Dorsolateral prefrontal cortex (tissue), 120 donors: ENCODE measurements at regions of chr17 and their contacts with region 1.

Region 1: DNA sequence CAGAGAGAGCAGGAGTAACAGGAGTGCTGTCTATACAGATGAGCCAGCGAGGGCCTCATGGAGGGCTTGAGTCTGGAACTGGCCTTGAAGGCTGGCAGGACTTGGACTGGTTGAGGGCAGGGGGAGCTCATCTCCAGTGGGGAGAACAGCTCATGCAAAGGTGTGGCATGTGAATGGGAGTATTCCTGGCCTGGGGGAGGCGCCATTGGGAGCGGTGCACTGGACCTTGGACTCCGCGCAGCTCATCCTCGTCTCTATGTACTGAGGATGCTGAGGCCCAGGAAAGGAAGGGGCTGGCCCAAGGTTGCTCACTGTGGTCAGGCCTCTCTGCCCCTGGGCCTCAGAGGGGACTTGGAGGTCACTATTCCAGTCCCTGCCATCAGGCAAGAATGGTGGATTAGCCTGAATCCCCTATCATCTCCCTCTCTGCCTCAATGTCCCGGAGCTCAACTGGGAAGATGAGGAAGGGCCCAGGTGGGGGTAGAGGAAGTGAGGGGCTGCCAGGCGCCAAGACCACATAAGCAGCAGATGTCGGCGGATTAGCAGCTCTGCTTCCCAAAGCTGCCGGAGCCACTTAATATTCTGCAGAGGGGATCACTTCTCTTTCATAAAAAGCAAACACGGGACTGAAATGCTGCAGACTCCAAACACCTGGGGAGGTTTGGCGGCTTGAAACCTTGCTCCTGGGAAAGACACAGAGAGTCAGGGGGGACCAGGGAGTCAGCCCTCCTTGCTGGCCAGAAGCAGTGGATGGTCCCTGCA is 88.9 kb downstream of the SDK2 start:
- DNase-seq: no peak
- H3K4me3 ChIP-seq: no peak overlapping the region
- H3K27ac ChIP-seq: no peak overlapping the region
- H3K27me3 ChIP-seq: peaks cover 0 to 22% (median 0%) of the 10 kb centered on the region in 45 donors
- CTCF ChIP-seq: no peak

Region 2: GRCh38 chr17:73532421-73532901 is 22.9 kb before region 1 on chr17:
- intact Hi-C with region 1: no loop called
- DNase-seq: peak in 1 of 10 donors; percentile 70
- H3K4me3 ChIP-seq: no peak overlapping the region
- H3K27ac ChIP-seq: peak overlapping the region in 13 of 59 donors; percentile 9 to 72 (median 50)
- H3K27me3 ChIP-seq: peaks cover 0 to 4% (median 0%) of the 10 kb centered on the region in 45 donors
- CTCF ChIP-seq: no peak

Region 3: GRCh38 chr17:73609758-73610157 is 54.4 kb after region 1 on chr17:
- intact Hi-C with region 1: loop called in 1 of 2 experiments (anchors 5 kb)
- DNase-seq: no peak
- H3K4me3 ChIP-seq: no peak overlapping the region
- H3K27ac ChIP-seq: no peak overlapping the region
- H3K27me3 ChIP-seq: peaks cover 0 to 20% (median 0%) of the 10 kb centered on the region in 45 donors
- CTCF ChIP-seq: no peak